ENCODE measurements at regions of chr2 and their contacts with region 1.

Region 1: DNA sequence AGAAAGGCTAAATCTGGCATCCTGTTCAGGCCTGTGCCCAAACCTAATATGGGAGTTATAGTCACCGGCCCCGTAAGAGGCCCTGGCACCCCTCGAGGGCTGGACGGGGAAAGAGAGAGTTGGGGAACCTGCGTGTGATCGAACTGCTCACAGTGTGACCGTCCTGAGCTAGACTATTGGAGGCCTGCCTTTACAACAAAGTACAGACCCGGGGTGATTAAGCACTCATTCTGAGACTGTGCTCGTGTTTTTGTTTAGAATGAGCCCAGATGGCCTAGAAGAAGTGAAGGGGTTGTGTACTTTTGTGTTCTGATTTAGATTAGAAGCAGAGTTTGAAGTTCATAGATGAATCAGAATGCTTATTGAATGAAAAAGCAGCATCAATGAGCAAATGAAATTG is 115.3 kb downstream of the ACOXL start:
- DNase-seq: no peak
- ATAC-seq: no peak
- H3K4me3 ChIP-seq: no peak overlapping the region
- H3K4me3 Mint-ChIP-seq: peak overlapping the region in 2 of 10 donors; percentile 13 to 74
- H3K27ac ChIP-seq: peak overlapping the region; percentile 52
- H3K27ac Mint-ChIP-seq: peak overlapping the region; percentile 79 to 96 (median 89)
- H3K4me1 ChIP-seq: peaks cover 29 to 47% of the 10 kb centered on the region in 2 donors
- H3K4me1 Mint-ChIP-seq: peaks cover 38 to 78% (median 55%) of the 10 kb centered on the region in 7 donors
- H3K27me3 ChIP-seq: no peaks in the 10 kb centered on the region
- H3K27me3 Mint-ChIP-seq: peaks cover 0 to 27% (median 0%) of the 10 kb centered on the region in 5 donors

Region 2: GRCh38 chr2:110812726-110813645 is 34.7 kb before region 1 on chr2:
- CTCF ChIA-PET with region 1: interaction called, 5 read pairs
- POLR2A ChIA-PET with region 1: interaction called, 4 read pairs
- intact Hi-C with region 1: loop called in 1 of 2 experiments (anchors 1 kb)
- DNase-seq: no peak
- ATAC-seq: no peak
- H3K4me3 ChIP-seq: no peak overlapping the region
- H3K4me3 Mint-ChIP-seq: no peak overlapping the region
- H3K27ac ChIP-seq: no peak overlapping the region
- H3K27ac Mint-ChIP-seq: peak overlapping the region in 1 of 9 donors; percentile 24
- H3K4me1 ChIP-seq: peaks cover 0 to 3% of the 10 kb centered on the region in 2 donors
- H3K4me1 Mint-ChIP-seq: peaks cover 0 to 12% (median 5%) of the 10 kb centered on the region in 7 donors
- H3K27me3 ChIP-seq: no peaks in the 10 kb centered on the region
- H3K27me3 Mint-ChIP-seq: peaks cover 0 to 28% (median 4%) of the 10 kb centered on the region in 5 donors

Region 3: GRCh38 chr2:110865188-110865587 is 17.5 kb after region 1 on chr2:
- CTCF ChIA-PET with region 1: no interaction called
- POLR2A ChIA-PET with region 1: no interaction called
- intact Hi-C with region 1: loop called in 1 of 2 experiments (anchors 1 kb)
- DNase-seq: peak in 1 of 9 donors; percentile 48
- ATAC-seq: peak; percentile 35
- H3K4me3 ChIP-seq: no peak overlapping the region
- H3K4me3 Mint-ChIP-seq: peak overlapping the region in 4 of 10 donors; percentile 9 to 59 (median 40)
- H3K27ac ChIP-seq: no peak overlapping the region
- H3K27ac Mint-ChIP-seq: peak overlapping the region in 4 of 9 donors; percentile 13 to 77 (median 54)
- H3K4me1 ChIP-seq: peaks cover 12 to 15% of the 10 kb centered on the region in 2 donors
- H3K4me1 Mint-ChIP-seq: peaks cover 23 to 67% (median 29%) of the 10 kb centered on the region in 7 donors
- H3K27me3 ChIP-seq: no peaks in the 10 kb centered on the region
- H3K27me3 Mint-ChIP-seq: peaks cover 0 to 49% (median 4%) of the 10 kb centered on the region in 5 donors

Region 4: GRCh38 chr2:110931648-110932047 is 84.0 kb after region 1 on chr2:
- CTCF ChIA-PET with region 1: no interaction called
- POLR2A ChIA-PET with region 1: no interaction called
- intact Hi-C with region 1: no loop called
- DNase-seq: no peak
- ATAC-seq: no peak
- H3K4me3 ChIP-seq: no peak overlapping the region
- H3K4me3 Mint-ChIP-seq: no peak overlapping the region
- H3K27ac ChIP-seq: no peak overlapping the region
- H3K27ac Mint-ChIP-seq: no peak overlapping the region
- H3K4me1 ChIP-seq: no peaks in the 10 kb centered on the region
- H3K4me1 Mint-ChIP-seq: no peaks in the 10 kb centered on the region
- H3K27me3 ChIP-seq: no peaks in the 10 kb centered on the region
- H3K27me3 Mint-ChIP-seq: peaks cover 0 to 4% (median 3%) of the 10 kb centered on the region in 5 donors

Region 5: GRCh38 chr2:110955556-110955955 is 107.9 kb after region 1 on chr2:
- CTCF ChIA-PET with region 1: no interaction called
- POLR2A ChIA-PET with region 1: no interaction called
- intact Hi-C with region 1: no loop called
- DNase-seq: no peak
- ATAC-seq: no peak
- H3K4me3 ChIP-seq: no peak overlapping the region
- H3K4me3 Mint-ChIP-seq: no peak overlapping the region
- H3K27ac ChIP-seq: no peak overlapping the region
- H3K27ac Mint-ChIP-seq: no peak overlapping the region
- H3K4me1 ChIP-seq: no peaks in the 10 kb centered on the region
- H3K4me1 Mint-ChIP-seq: no peaks in the 10 kb centered on the region
- H3K27me3 ChIP-seq: no peaks in the 10 kb centered on the region
- H3K27me3 Mint-ChIP-seq: peaks cover 0 to 31% (median 0%) of the 10 kb centered on the region in 5 donors

Region 6: DNA sequence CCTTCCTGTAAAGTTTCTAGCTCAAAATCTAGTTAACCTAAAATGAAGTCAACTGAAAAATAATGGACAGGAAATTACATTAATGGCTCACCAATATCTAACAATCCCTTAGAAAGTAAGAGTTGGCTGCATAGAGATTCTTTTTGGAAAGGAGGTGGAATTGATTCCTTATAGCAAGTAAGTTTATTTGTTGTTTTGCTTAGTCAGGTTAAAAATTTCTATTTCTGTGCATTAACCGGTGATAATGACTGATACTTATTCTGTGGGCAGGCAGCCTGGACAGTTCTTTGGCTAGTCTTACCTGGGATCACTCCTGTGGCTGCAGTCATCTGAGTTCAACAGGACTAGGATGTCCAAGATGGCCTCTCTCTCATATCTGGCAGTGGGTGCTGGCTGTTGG is 266.2 kb after region 1 on chr2:
- CTCF ChIA-PET with region 1: no interaction called
- POLR2A ChIA-PET with region 1: no interaction called
- intact Hi-C with region 1: loop called in 1 of 2 experiments (anchors 1 kb)
- DNase-seq: no peak
- ATAC-seq: no peak
- H3K4me3 ChIP-seq: no peak overlapping the region
- H3K4me3 Mint-ChIP-seq: no peak overlapping the region
- H3K27ac ChIP-seq: no peak overlapping the region
- H3K27ac Mint-ChIP-seq: no peak overlapping the region
- H3K4me1 ChIP-seq: peaks cover 18 to 20% of the 10 kb centered on the region in 2 donors
- H3K4me1 Mint-ChIP-seq: peaks cover 18 to 27% (median 20%) of the 10 kb centered on the region in 7 donors
- H3K27me3 ChIP-seq: peaks cover 0 to 11% of the 10 kb centered on the region in 2 donors
- H3K27me3 Mint-ChIP-seq: peaks cover 37 to 84% (median 48%) of the 10 kb centered on the region in 5 donors